PC-3 (cell line): ENCODE measurements at regions of chr10 and their contacts with region 1.

Region 1: GRCh38 chr10:114937962-114938855 is at the start of gene TRUB1:
- DNase-seq: peak; percentile 89
- ATAC-seq: peak; percentile 99
- H3K4me3 ChIP-seq: peak within 1 kb of the TSS; percentile 92
- H3K27ac ChIP-seq: peak within 1 kb of the TSS; percentile 32
- H3K4me1 ChIP-seq: peaks cover 12% of the 10 kb centered on the region
- H3K27me3 ChIP-seq: no peaks in the 10 kb centered on the region
- CTCF ChIP-seq: no peak
- total RNA-seq, gene TRUB1: 21.7 and 28.0 TPM in 2 replicates

Region 2: DNA sequence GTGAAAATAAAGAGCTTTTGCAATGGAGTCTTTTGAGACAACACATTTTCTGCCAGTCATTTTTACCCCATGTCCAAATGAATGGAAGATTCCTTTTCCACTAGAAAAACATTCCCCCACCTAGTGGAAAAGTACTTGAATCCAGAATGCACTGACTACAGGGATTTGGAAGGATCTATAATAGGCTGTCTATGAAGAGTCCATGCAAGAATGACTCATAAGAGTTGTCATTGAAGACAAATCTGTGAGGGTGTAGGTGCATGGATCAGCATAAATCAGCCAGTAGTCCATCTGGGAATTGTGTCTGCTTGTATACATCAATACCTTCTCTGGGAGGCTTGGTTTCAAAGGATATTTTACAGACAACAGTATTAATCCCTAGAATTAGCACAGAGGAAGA is 32.8 kb before region 1 on chr10:
- CTCF ChIA-PET with region 1: no interaction called
- POLR2A ChIA-PET with region 1: no interaction called
- intact Hi-C with region 1: loop called (anchors 2 kb)
- DNase-seq: peak; percentile 53
- ATAC-seq: peak; percentile 85
- H3K4me3 ChIP-seq: no peak overlapping the region
- H3K27ac ChIP-seq: peak overlapping the region; percentile 24; the same call in 1 of the 2 replicates
- H3K4me1 ChIP-seq: peaks cover 20% of the 10 kb centered on the region
- H3K27me3 ChIP-seq: no peaks in the 10 kb centered on the region
- CTCF ChIP-seq: no peak